PC-9 (cell line): ENCODE measurements at regions of chr15 and their contacts with region 1.

Region 1: DNA sequence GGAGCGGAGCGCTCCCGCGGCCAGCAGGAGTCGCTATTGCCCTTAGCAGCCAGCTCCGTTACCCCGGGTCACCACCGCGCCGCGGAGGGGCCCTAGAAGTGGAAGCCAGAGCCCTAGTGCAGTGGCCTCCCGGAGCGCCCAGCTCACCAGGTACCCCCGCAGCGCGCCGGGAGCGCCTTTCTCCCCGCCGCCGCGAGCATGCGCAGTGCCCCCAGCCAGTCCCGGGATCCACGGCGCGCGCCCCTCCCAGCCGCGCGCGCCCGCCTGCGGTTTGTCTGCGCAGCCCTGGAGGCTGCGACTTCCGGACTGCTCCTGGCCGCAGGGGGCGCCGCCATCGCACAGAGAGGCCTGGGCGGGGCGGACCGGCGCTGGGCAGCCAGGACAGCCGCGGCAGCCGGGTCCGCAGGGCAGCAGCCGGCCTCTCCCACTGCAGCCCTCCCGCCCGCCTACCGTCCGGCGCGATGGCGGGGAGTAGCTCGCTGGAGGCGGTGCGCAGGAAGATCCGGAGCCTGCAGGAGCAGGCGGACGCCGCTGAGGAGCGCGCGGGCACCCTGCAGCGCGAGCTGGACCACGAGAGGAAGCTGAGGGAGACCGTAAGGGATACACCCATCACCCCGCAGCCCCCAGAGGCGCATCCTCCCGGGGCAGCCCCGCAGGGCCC is 5.7 kb downstream of the TPM1 start:
- DNase-seq: peak; percentile 79 to 93
- H3K4me3 ChIP-seq: peak overlapping the region; percentile 80
- H3K27ac ChIP-seq: peak overlapping the region; percentile 68
- H3K4me1 ChIP-seq: peaks cover 50% of the 10 kb centered on the region
- H3K27me3 ChIP-seq: no peaks in the 10 kb centered on the region
- CTCF ChIP-seq: peak; percentile 80

Region 2: DNA sequence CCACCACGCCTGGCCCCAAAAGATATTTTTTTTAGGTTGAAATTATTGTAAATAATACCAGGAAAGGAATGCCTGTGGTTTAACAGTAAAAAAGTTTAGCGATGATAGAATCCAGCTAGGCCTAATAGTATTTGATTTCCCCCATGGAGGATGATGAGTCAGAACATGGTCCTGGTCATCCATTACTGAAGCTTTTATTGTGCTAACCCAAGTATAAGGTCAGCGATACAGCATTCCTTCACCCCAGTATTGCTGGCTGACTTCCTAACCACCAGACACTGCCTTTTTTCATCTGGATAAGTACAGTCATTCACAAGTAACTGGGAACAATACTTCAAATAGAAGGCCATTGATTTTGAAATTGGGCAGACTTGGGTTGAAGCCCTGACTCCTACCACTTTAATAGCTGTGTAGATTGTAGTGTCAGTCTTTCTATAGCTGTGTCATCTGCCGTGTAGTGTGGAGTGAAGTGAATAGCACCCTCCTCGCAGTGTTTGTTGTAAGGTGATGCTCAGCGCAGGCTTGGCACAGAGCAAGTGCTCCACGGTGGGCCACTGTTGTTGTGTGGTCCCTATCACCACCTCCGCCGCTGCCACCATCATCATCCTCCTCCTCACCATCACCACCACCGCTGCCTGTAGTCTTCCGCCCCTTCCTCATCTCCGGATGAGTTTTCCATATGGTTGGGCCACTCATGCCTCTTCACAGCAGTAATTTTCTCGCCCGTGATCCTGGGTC is 441.7 kb before region 1 on chr15:
- CTCF ChIA-PET with region 1: no interaction called
- POLR2A ChIA-PET with region 1: no interaction called
- intact Hi-C with region 1: loop called (anchors 10 kb)
- DNase-seq: peak; percentile 37 to 94
- H3K4me3 ChIP-seq: no peak overlapping the region
- H3K27ac ChIP-seq: peak overlapping the region; percentile 62
- H3K4me1 ChIP-seq: peaks cover 46% of the 10 kb centered on the region
- H3K27me3 ChIP-seq: no peaks in the 10 kb centered on the region
- CTCF ChIP-seq: no peak

Region 3: DNA sequence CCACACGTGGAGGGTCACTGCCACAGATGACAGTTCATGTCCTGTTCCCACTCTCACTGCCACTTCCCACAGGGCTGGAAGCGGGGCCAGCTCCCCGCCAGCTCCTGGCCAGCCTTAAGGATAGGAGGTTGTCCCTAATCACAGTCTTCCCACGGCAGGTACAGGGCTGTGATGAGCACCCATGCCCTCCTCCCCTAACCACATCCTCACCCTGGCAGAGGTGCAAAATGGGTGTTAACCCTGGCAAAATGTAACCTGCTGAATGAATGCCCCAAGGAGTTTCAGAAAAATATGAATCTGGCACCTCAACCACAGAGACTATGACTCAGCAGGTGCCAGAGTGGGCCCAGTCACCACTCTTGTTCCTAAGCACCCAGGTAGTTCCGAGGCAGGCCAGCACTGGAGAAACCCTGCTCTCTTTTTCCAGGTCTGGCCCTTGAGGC is 190.8 kb before region 1 on chr15:
- CTCF ChIA-PET with region 1: no interaction called
- POLR2A ChIA-PET with region 1: interaction called, 9 read pairs
- intact Hi-C with region 1: loop called (anchors 2 kb)
- DNase-seq: peak; percentile 85 to 93
- H3K4me3 ChIP-seq: peak overlapping the region; percentile 38; the same call in 1 of the 2 replicates
- H3K27ac ChIP-seq: peak overlapping the region; percentile 99
- H3K4me1 ChIP-seq: peaks cover 69% of the 10 kb centered on the region
- H3K27me3 ChIP-seq: no peaks in the 10 kb centered on the region
- CTCF ChIP-seq: no peak

Region 4: GRCh38 chr15:62928242-62928995 is 119.8 kb before region 1 on chr15:
- CTCF ChIA-PET with region 1: no interaction called
- POLR2A ChIA-PET with region 1: no interaction called
- intact Hi-C with region 1: loop called (anchors 10 kb)
- DNase-seq: peak in 1 of 2 experiments; percentile 39
- H3K4me3 ChIP-seq: no peak overlapping the region
- H3K27ac ChIP-seq: peak overlapping the region; percentile 80
- H3K4me1 ChIP-seq: peaks cover 23% of the 10 kb centered on the region
- H3K27me3 ChIP-seq: no peaks in the 10 kb centered on the region
- CTCF ChIP-seq: no peak

Region 5: DNA sequence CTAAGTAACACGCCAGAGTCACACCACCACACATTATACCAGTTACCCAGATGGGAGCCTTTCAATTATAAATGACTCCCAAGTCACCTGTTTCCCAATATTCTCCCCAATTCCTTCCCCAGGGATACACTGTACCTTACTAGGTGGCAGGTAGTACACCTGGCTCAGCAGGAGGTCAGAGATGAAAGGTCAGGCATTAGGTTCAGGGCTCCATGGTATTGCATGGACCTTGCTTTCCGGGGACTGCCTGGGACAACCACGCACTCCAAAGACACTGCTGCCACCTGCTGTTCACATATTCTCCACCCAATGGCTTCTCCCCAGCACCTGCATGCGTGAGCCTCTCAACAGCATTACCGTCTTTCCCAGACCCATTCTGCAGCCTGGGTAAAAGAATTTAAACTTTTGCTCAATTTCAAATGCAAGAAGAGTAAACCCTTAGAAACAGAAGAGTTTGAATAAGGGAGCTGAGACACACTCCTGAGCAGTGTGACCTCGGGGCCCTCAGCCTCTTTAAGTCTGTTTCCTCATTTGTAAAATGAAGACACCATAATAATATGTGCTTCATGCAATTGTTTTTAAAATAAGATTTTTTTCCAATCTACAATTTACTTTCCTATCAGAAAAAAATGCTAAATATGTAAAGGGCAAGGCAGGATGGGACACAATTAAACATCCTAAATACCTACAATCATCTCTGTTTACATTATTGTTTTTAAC is 45.4 kb after region 1 on chr15:
- CTCF ChIA-PET with region 1: interaction called, 5 read pairs
- POLR2A ChIA-PET with region 1: interaction called, 5 read pairs
- intact Hi-C with region 1: loop called (anchors 2 kb)
- DNase-seq: peak in 1 of 2 experiments; percentile 70
- H3K4me3 ChIP-seq: no peak overlapping the region
- H3K27ac ChIP-seq: no peak overlapping the region
- H3K4me1 ChIP-seq: no peaks in the 10 kb centered on the region
- H3K27me3 ChIP-seq: no peaks in the 10 kb centered on the region
- CTCF ChIP-seq: peak; percentile 78

Region 6: GRCh38 chr15:63288778-63289378 is 240.6 kb after region 1 on chr15:
- CTCF ChIA-PET with region 1: no interaction called
- POLR2A ChIA-PET with region 1: no interaction called
- intact Hi-C with region 1: loop called (anchors 5 kb)
- DNase-seq: no peak
- H3K4me3 ChIP-seq: no peak overlapping the region
- H3K27ac ChIP-seq: no peak overlapping the region
- H3K4me1 ChIP-seq: no peaks in the 10 kb centered on the region
- H3K27me3 ChIP-seq: no peaks in the 10 kb centered on the region
- CTCF ChIP-seq: peak; percentile 75

Region 7: DNA sequence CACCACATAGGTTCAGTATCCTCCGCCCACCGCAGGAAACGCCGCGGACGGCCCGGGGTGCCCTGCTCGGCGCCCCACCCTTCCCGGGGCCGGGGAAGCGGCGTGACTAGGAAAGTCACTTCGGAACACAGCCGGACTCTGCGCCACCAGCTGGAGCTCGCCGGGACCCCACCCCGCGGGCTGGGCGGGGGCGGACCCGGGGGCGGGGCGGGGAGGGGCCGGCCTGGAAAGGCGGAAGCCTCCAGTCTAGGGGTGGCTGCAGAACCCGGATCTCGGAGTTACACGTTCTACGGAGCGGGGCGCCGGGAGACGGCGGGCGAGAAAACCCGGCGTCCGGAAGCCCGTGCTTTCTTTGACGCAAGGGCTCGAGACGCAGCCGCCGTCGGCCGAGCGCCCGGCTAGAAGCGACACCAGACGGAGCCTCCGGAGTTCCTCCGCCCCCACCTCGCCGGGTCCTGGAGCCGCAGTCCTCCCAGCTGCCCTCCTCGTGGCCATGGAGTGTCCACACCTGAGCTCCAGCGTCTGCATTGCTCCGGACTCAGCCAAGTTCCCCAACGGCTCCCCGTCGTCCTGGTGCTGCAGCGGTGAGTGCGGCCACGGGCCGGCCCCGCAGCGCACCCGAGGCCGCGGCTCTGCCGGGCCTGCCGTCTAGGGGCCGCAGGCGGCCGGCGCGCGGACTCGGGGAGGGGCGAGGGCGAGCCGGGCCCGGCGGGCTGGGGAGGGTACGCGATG is 456.2 kb after region 1 on chr15 and contains the start of gene USP3:
- CTCF ChIA-PET with region 1: no interaction called
- POLR2A ChIA-PET with region 1: no interaction called
- intact Hi-C with region 1: loop called (anchors 5 kb)
- DNase-seq: peak; percentile 75 to 95
- H3K4me3 ChIP-seq: peak within 1 kb of the TSS; percentile 91
- H3K27ac ChIP-seq: peak within 1 kb of the TSS; percentile 97
- H3K4me1 ChIP-seq: peaks cover 66% of the 10 kb centered on the region
- H3K27me3 ChIP-seq: no peaks in the 10 kb centered on the region
- CTCF ChIP-seq: no peak; the same call in 1 of the 2 replicates
- total RNA-seq, gene USP3: 57.5 and 59.7 TPM in 2 replicates